IMR-90 (cell line): ENCODE measurements at regions of chr13 and their contacts with region 1.

Region 1: DNA sequence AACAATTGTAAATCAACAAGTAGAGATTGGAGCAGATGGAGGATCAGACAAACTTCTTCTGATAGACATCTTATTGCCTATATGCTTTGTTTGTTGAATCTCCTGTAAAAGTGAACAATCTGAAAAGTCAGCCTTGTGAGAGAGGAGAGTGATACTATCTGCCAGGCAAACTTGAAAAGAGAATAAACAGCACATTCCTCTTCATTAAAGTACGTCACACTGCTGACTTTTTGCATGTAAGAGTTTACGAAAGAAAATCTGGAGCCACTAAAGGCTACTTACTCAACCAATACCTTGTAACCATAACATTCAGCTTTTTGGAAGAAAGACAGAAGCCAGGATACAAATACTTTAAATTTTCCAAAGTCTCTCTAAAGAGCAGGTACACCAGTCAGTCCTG is 42.5 kb downstream of the EDNRB start:
- DNase-seq: peak; percentile 90
- ATAC-seq: peak; percentile 83
- H3K4me3 ChIP-seq: no peak overlapping the region
- H3K27ac ChIP-seq: peak overlapping the region; percentile 25; the same call in 1 of the 2 replicates
- H3K4me1 ChIP-seq: peaks cover 16% of the 10 kb centered on the region
- H3K27me3 ChIP-seq: no peaks in the 10 kb centered on the region
- CTCF ChIP-seq: no peak
- POLR2A ChIP-seq: no peak
- RAD21 ChIP-seq: no peak

Region 2: DNA sequence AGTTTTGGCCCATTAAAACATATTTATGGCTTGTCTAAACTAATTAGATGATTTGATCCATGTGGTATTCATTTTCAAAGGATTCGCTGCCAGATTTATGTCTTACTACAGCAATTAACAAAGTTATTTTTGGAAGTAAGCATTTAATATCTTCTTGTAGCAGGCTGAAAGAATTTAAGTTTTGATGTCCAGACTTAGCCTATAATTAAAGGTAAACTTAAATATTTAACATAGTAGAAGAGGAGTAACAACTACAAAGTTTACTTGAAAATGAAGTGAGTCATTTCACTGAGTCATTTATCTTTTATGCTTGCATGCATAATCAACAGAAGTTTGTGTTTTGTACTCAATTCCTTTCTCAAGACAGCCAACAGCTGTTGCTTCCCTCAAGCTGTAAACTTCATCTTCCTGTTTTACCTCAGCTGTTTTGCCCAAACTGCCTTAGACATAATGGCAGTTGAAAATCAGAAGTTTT is 15.6 kb before region 1 on chr13:
- CTCF ChIA-PET with region 1: no interaction called
- POLR2A ChIA-PET with region 1: no interaction called
- dilution Hi-C with region 1: no loop called
- in situ Hi-C with region 1: no loop called
- intact Hi-C with region 1: loop called (anchors 1 kb)
- DNase-seq: peak; percentile 93
- ATAC-seq: peak; percentile 75
- H3K4me3 ChIP-seq: no peak overlapping the region
- H3K27ac ChIP-seq: no peak overlapping the region; the same call in 1 of the 2 replicates
- H3K4me1 ChIP-seq: peaks cover 14% of the 10 kb centered on the region
- H3K27me3 ChIP-seq: no peaks in the 10 kb centered on the region
- CTCF ChIP-seq: no peak
- POLR2A ChIP-seq: no peak
- RAD21 ChIP-seq: no peak